Right cardiac atrium (tissue), 5 donors: ENCODE measurements at regions of chr15 and their contacts with region 1.

Region 1: GRCh38 chr15:47987908-47988532 is 132.8 kb upstream of the SLC24A5 start:
- DNase-seq: no peak
- ATAC-seq: peak; percentile 89 to 92
- H3K4me3 ChIP-seq: no peak overlapping the region
- H3K27ac ChIP-seq: no peak overlapping the region
- H3K4me1 ChIP-seq: no peaks in the 10 kb centered on the region
- H3K27me3 ChIP-seq: no peaks in the 10 kb centered on the region

Region 2: GRCh38 chr15:47196057-47196456 is 792.0 kb before region 1 on chr15:
- intact Hi-C with region 1: loop called in 3 of 4 experiments (anchors 2 to 5 kb)
- DNase-seq: peak; percentile 77 to 88 (median 87)
- ATAC-seq: peak; percentile 95 to 97
- H3K4me3 ChIP-seq: no peak overlapping the region
- H3K27ac ChIP-seq: no peak overlapping the region
- H3K4me1 ChIP-seq: no peaks in the 10 kb centered on the region
- H3K27me3 ChIP-seq: peaks cover 3% of the 10 kb centered on the region

Region 3: GRCh38 chr15:47473832-47474231 is 514.2 kb before region 1 on chr15:
- intact Hi-C with region 1: loop called in 2 of 4 experiments (anchors 10 kb)
- DNase-seq: peak; percentile 77 to 90 (median 86)
- ATAC-seq: peak; percentile 98 to 99
- H3K4me3 ChIP-seq: no peak overlapping the region
- H3K27ac ChIP-seq: no peak overlapping the region
- H3K4me1 ChIP-seq: no peaks in the 10 kb centered on the region
- H3K27me3 ChIP-seq: no peaks in the 10 kb centered on the region

Region 4: GRCh38 chr15:47496343-47497171 is 491.5 kb before region 1 on chr15:
- intact Hi-C with region 1: loop called in 2 of 4 experiments (anchors 10 kb)
- DNase-seq: no peak
- ATAC-seq: no peak
- H3K4me3 ChIP-seq: no peak overlapping the region
- H3K27ac ChIP-seq: no peak overlapping the region
- H3K4me1 ChIP-seq: no peaks in the 10 kb centered on the region
- H3K27me3 ChIP-seq: no peaks in the 10 kb centered on the region

Region 5: DNA sequence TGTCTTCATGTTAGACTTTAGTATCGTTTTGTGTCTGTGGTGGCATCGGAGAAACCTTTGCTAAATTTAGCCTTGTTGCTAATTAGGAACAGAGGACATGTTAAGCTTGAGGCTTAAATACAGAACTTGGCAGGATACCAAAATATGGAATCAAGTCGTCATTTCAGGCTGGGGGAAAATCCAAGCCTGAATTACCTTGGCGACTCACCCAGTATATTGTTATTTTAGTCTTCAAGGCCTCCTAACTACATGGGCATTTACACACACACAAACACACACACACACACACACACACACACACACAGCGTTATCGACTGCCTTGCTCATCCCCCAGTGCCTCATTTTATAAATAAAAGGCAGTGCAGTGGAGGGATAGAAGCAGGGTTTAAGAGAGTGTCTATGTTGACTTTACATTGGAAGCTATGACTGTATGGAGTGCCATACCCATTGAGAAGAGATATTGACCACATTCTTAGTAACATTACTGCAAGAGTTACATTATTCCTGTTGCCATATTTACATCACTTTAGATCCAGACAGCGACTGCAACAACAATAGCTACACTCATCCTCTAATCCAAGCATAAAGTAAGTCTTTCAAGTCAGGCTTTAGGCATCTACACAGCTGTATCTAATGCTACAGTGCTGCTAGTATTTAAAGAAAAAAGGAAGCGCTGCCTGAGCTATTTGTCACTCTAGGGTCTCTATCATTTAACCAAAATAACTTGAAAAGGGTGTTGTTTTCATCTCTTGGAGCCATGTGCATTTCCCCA is 481.5 kb before region 1 on chr15:
- intact Hi-C with region 1: loop called in 1 of 4 experiments (anchors 10 kb)
- DNase-seq: peak in 1 of 3 donors; percentile 36
- ATAC-seq: peak; percentile 42 to 63
- H3K4me3 ChIP-seq: no peak overlapping the region
- H3K27ac ChIP-seq: no peak overlapping the region
- H3K4me1 ChIP-seq: peaks cover 8% of the 10 kb centered on the region
- H3K27me3 ChIP-seq: no peaks in the 10 kb centered on the region

Region 6: GRCh38 chr15:47717036-47717611 is 270.9 kb before region 1 on chr15 and contains the start of gene SEMA6D:
- intact Hi-C with region 1: loop called in 3 of 4 experiments (anchors 5 to 10 kb)
- DNase-seq: peak; percentile 83 to 94 (median 94)
- ATAC-seq: peak; percentile 84 to 91
- H3K4me3 ChIP-seq: peak within 1 kb of the TSS; percentile 96
- H3K27ac ChIP-seq: peak within 1 kb of the TSS; percentile 95
- H3K4me1 ChIP-seq: peaks cover 4% of the 10 kb centered on the region
- H3K27me3 ChIP-seq: no peaks in the 10 kb centered on the region
- total RNA-seq, gene SEMA6D: 7.0 to 28.3 (median 22.3) TPM